T-cell (primary cell): ENCODE measurements at regions of chr3 and their contacts with region 1.

Region 1: GRCh38 chr3:128322066-128323022 is 144.3 kb downstream of the DNAJB8 start:
- DNase-seq: peak; percentile 40 to 76 (median 62)
- ATAC-seq: peak; percentile 52 to 76 (median 68)
- H3K4me3 ChIP-seq: no peak overlapping the region
- H3K4me3 Mint-ChIP-seq: peak overlapping the region in 1 of 3 donors; percentile 10
- H3K27ac ChIP-seq: no peak overlapping the region
- H3K27ac Mint-ChIP-seq: peak overlapping the region in 1 of 2 donors; percentile 85
- H3K4me1 ChIP-seq: peaks cover 9 to 73% of the 10 kb centered on the region in 2 experiments
- H3K4me1 Mint-ChIP-seq: peaks cover 52 to 70% (median 63%) of the 10 kb centered on the region in 3 donors
- H3K27me3 ChIP-seq: no peaks in the 10 kb centered on the region
- H3K27me3 Mint-ChIP-seq: no peaks in the 10 kb centered on the region

Region 2: GRCh38 chr3:128095222-128095703 is 227.1 kb before region 1 on chr3:
- CTCF ChIA-PET with region 1: interaction called, 6 to 10 read pairs
- POLR2A ChIA-PET with region 1: interaction called in 1 of 2 experiments, 4 read pairs
- DNase-seq: peak; percentile 52 to 86 (median 77)
- ATAC-seq: peak; percentile 85 to 99 (median 97)
- H3K4me3 ChIP-seq: no peak overlapping the region
- H3K4me3 Mint-ChIP-seq: no peak overlapping the region
- H3K27ac ChIP-seq: no peak overlapping the region
- H3K27ac Mint-ChIP-seq: no peak overlapping the region
- H3K4me1 ChIP-seq: peaks cover 3 to 13% of the 10 kb centered on the region in 2 experiments
- H3K4me1 Mint-ChIP-seq: peaks cover 5 to 10% (median 7%) of the 10 kb centered on the region in 3 donors
- H3K27me3 ChIP-seq: no peaks in the 10 kb centered on the region
- H3K27me3 Mint-ChIP-seq: no peaks in the 10 kb centered on the region

Region 3: GRCh38 chr3:128226795-128227395 is 95.4 kb before region 1 on chr3:
- CTCF ChIA-PET with region 1: interaction called, 3 to 11 read pairs
- POLR2A ChIA-PET with region 1: no interaction called
- DNase-seq: peak in 20 of 35 experiments; percentile 3 to 49 (median 20)
- ATAC-seq: peak in 3 of 4 experiments; percentile 50 to 69 (median 59)
- H3K4me3 ChIP-seq: no peak overlapping the region
- H3K4me3 Mint-ChIP-seq: no peak overlapping the region
- H3K27ac ChIP-seq: no peak overlapping the region
- H3K27ac Mint-ChIP-seq: no peak overlapping the region
- H3K4me1 ChIP-seq: peaks cover 0 to 13% of the 10 kb centered on the region in 2 experiments
- H3K4me1 Mint-ChIP-seq: peaks cover 6 to 21% (median 15%) of the 10 kb centered on the region in 3 donors
- H3K27me3 ChIP-seq: no peaks in the 10 kb centered on the region
- H3K27me3 Mint-ChIP-seq: no peaks in the 10 kb centered on the region

Region 4: GRCh38 chr3:128307029-128307633 is 15.2 kb before region 1 on chr3:
- CTCF ChIA-PET with region 1: interaction called, 3 to 16 read pairs
- POLR2A ChIA-PET with region 1: no interaction called
- DNase-seq: peak in 2 of 35 experiments; percentile 1 to 40
- ATAC-seq: peak; percentile 27 to 58 (median 55)
- H3K4me3 ChIP-seq: no peak overlapping the region
- H3K4me3 Mint-ChIP-seq: no peak overlapping the region
- H3K27ac ChIP-seq: no peak overlapping the region
- H3K27ac Mint-ChIP-seq: peak overlapping the region in 1 of 2 donors; percentile 69
- H3K4me1 ChIP-seq: peaks cover 0 to 10% of the 10 kb centered on the region in 2 experiments
- H3K4me1 Mint-ChIP-seq: peaks cover 12 to 43% (median 20%) of the 10 kb centered on the region in 3 donors
- H3K27me3 ChIP-seq: no peaks in the 10 kb centered on the region
- H3K27me3 Mint-ChIP-seq: no peaks in the 10 kb centered on the region

Region 5: GRCh38 chr3:128337305-128337704 is 15.0 kb after region 1 on chr3:
- CTCF ChIA-PET with region 1: no interaction called
- POLR2A ChIA-PET with region 1: no interaction called
- DNase-seq: no peak
- ATAC-seq: no peak
- H3K4me3 ChIP-seq: no peak overlapping the region
- H3K4me3 Mint-ChIP-seq: no peak overlapping the region
- H3K27ac ChIP-seq: no peak overlapping the region
- H3K27ac Mint-ChIP-seq: no peak overlapping the region
- H3K4me1 ChIP-seq: no peaks in the 10 kb centered on the region
- H3K4me1 Mint-ChIP-seq: peaks cover 0 to 11% (median 0%) of the 10 kb centered on the region in 3 donors
- H3K27me3 ChIP-seq: no peaks in the 10 kb centered on the region
- H3K27me3 Mint-ChIP-seq: no peaks in the 10 kb centered on the region